ENCODE measurements at regions of chr5 and their contacts with region 1.

Region 1: GRCh38 chr5:151384106-151384505 is 36.7 kb upstream of the SLC36A2 start:
- DNase-seq: no peak
- ATAC-seq: no peak
- H3K4me3 Mint-ChIP-seq: no peak overlapping the region
- H3K27ac Mint-ChIP-seq: no peak overlapping the region
- H3K4me1 Mint-ChIP-seq: peaks cover 55% of the 10 kb centered on the region
- H3K27me3 Mint-ChIP-seq: peaks cover 2% of the 10 kb centered on the region; the same call in 1 of the 2 replicates
- CTCF ChIP-seq: no peak

Region 2: GRCh38 chr5:151414536-151414935 is 30.4 kb after region 1 on chr5:
- CTCF ChIA-PET with region 1: interaction called, 10 read pairs
- POLR2A ChIA-PET with region 1: no interaction called
- DNase-seq: no peak
- ATAC-seq: no peak
- H3K4me3 Mint-ChIP-seq: no peak overlapping the region
- H3K27ac Mint-ChIP-seq: no peak overlapping the region
- H3K4me1 Mint-ChIP-seq: no peaks in the 10 kb centered on the region
- H3K27me3 Mint-ChIP-seq: peaks cover 6% of the 10 kb centered on the region; the same call in 1 of the 2 replicates
- CTCF ChIP-seq: no peak